Activated CD4-positive, alpha-beta memory T cell treated with anti-CD3 and anti-CD28 coated beads for 36 hours (primary cell): ENCODE measurements at regions of chr1 and their contacts with region 1.

Region 1: GRCh38 chr1:9629445-9630201 is 21.9 kb upstream of the PIK3CD start:
- DNase-seq: peak; percentile 90
- H3K4me3 Mint-ChIP-seq: peak overlapping the region; percentile 87
- H3K27ac Mint-ChIP-seq: peak overlapping the region; percentile 97
- H3K4me1 Mint-ChIP-seq: peaks cover 59% of the 10 kb centered on the region
- H3K27me3 Mint-ChIP-seq: no peaks in the 10 kb centered on the region

Region 2: GRCh38 chr1:9615316-9616063 is 14.1 kb before region 1 on chr1:
- CTCF ChIA-PET with region 1: interaction called, 10 read pairs
- POLR2A ChIA-PET with region 1: no interaction called
- intact Hi-C with region 1: no loop called
- DNase-seq: peak; percentile 71
- H3K4me3 Mint-ChIP-seq: no peak overlapping the region
- H3K27ac Mint-ChIP-seq: no peak overlapping the region
- H3K4me1 Mint-ChIP-seq: no peaks in the 10 kb centered on the region
- H3K27me3 Mint-ChIP-seq: peaks cover 4% of the 10 kb centered on the region

Region 3: GRCh38 chr1:9665193-9665592 is 35.6 kb after region 1 on chr1:
- CTCF ChIA-PET with region 1: interaction called, 10 read pairs
- POLR2A ChIA-PET with region 1: interaction called, 3 read pairs
- intact Hi-C with region 1: loop called (anchors 1 kb)
- DNase-seq: no peak
- H3K4me3 Mint-ChIP-seq: no peak overlapping the region
- H3K27ac Mint-ChIP-seq: peak overlapping the region; percentile 8
- H3K4me1 Mint-ChIP-seq: peaks cover 48% of the 10 kb centered on the region
- H3K27me3 Mint-ChIP-seq: no peaks in the 10 kb centered on the region

Region 4: GRCh38 chr1:9705337-9706093 is 75.9 kb after region 1 on chr1:
- CTCF ChIA-PET with region 1: interaction called, 24 read pairs
- POLR2A ChIA-PET with region 1: interaction called, 4 read pairs
- intact Hi-C with region 1: no loop called
- DNase-seq: no peak
- H3K4me3 Mint-ChIP-seq: no peak overlapping the region
- H3K27ac Mint-ChIP-seq: peak overlapping the region; percentile 80
- H3K4me1 Mint-ChIP-seq: peaks cover 49% of the 10 kb centered on the region
- H3K27me3 Mint-ChIP-seq: no peaks in the 10 kb centered on the region

Region 5: GRCh38 chr1:9784508-9785133 is 155.0 kb after region 1 on chr1:
- CTCF ChIA-PET with region 1: interaction called, 7 read pairs
- POLR2A ChIA-PET with region 1: no interaction called
- intact Hi-C with region 1: loop called (anchors 1 kb)
- DNase-seq: peak; percentile 76
- H3K4me3 Mint-ChIP-seq: no peak overlapping the region
- H3K27ac Mint-ChIP-seq: no peak overlapping the region
- H3K4me1 Mint-ChIP-seq: peaks cover 28% of the 10 kb centered on the region
- H3K27me3 Mint-ChIP-seq: no peaks in the 10 kb centered on the region

Region 6: GRCh38 chr1:9910425-9911178 is 281.0 kb after region 1 on chr1:
- CTCF ChIA-PET with region 1: no interaction called
- POLR2A ChIA-PET with region 1: no interaction called
- intact Hi-C with region 1: loop called (anchors 2 kb)
- DNase-seq: peak; percentile 100
- H3K4me3 Mint-ChIP-seq: peak overlapping the region; percentile 94
- H3K27ac Mint-ChIP-seq: peak overlapping the region; percentile 94
- H3K4me1 Mint-ChIP-seq: peaks cover 28% of the 10 kb centered on the region
- H3K27me3 Mint-ChIP-seq: no peaks in the 10 kb centered on the region

Region 7: DNA sequence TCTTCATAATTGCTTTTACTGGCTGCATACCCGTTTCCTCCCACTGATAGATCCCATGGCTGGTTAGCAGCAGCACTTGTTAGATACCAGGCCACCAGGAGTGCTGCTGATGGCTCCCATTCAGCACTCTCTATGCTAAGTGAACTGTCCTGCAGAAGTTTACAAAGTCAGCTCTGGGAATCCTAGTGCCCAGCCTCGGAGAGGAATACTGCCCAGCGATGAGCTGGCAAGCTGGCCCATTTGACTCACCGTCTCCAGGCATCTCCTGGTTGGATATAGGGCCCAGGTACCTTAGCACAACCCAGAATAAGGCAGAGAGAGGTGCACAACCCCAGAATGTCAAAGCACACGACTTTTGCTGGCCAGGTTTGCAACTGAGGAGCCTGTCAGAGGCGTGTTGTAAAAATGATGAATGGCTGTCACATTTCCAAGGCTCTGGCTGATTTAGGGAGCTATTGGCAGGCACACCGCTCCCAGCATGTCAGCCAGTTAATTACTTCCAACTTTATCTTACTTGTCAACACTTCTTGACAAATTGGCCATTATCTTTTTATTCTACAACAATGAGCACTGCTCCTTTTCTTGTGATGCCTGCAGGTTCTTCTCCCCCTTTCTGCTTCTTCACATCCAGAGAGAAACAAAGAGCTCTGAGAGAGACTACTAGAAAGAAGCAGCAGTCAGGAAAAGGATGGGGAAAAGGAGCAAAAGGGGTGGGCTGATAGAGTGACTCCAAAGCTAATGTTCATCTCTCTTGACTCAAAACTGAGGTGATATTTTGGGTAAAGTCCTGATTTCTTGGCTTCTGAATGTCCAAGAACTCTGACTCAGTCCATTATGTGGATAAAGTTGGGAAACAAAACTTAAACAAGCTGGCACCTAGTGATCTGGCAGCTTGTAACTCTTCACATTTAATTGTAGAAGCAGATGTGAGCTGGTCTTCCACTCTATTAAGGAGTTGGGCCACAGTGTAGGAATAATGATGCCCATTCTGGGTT is 1548.7 kb after region 1 on chr1:
- CTCF ChIA-PET with region 1: no interaction called
- POLR2A ChIA-PET with region 1: no interaction called
- intact Hi-C with region 1: no loop called
- DNase-seq: no peak
- H3K4me3 Mint-ChIP-seq: no peak overlapping the region
- H3K27ac Mint-ChIP-seq: no peak overlapping the region
- H3K4me1 Mint-ChIP-seq: no peaks in the 10 kb centered on the region
- H3K27me3 Mint-ChIP-seq: no peaks in the 10 kb centered on the region